Sigmoid colon (tissue), 7 donors: ENCODE measurements at regions of chr15 and their contacts with region 1.

Region 1: GRCh38 chr15:40906091-40906990 is 12.1 kb downstream of the VPS18 start:
- DNase-seq: peak; percentile 94
- H3K4me3 ChIP-seq: peak overlapping the region; percentile 22 to 48 (median 43)
- H3K27ac ChIP-seq: peak overlapping the region; percentile 75 to 87 (median 80)
- H3K4me1 ChIP-seq: peaks cover 0 to 31% (median 30%) of the 10 kb centered on the region in 4 donors
- H3K27me3 ChIP-seq: no peaks in the 10 kb centered on the region
- CTCF ChIP-seq: peak; percentile 55 to 75 (median 60)
- EP300 ChIP-seq: no peak
- POLR2A ChIP-seq: no peak

Region 2: GRCh38 chr15:40941528-40942336 is 35.4 kb after region 1 on chr15:
- intact Hi-C with region 1: loop called (anchors 5 kb)
- DNase-seq: peak; percentile 86
- H3K4me3 ChIP-seq: peak overlapping the region; percentile 40 to 65 (median 60)
- H3K27ac ChIP-seq: peak overlapping the region; percentile 74 to 87 (median 86)
- H3K4me1 ChIP-seq: peaks cover 0 to 24% (median 16%) of the 10 kb centered on the region in 4 donors
- H3K27me3 ChIP-seq: no peaks in the 10 kb centered on the region
- CTCF ChIP-seq: peak in 2 of 4 experiments; percentile 35 to 52
- EP300 ChIP-seq: no peak
- POLR2A ChIP-seq: no peak

Region 3: GRCh38 chr15:40957581-40958051 is 51.3 kb after region 1 on chr15:
- intact Hi-C with region 1: loop called (anchors 5 kb)
- DNase-seq: peak; percentile 96
- H3K4me3 ChIP-seq: no peak overlapping the region
- H3K27ac ChIP-seq: peak overlapping the region; percentile 44 to 91 (median 82)
- H3K4me1 ChIP-seq: peaks cover 0 to 46% (median 31%) of the 10 kb centered on the region in 4 donors
- H3K27me3 ChIP-seq: no peaks in the 10 kb centered on the region
- CTCF ChIP-seq: no peak
- EP300 ChIP-seq: peak in 2 of 4 donors; percentile 36 to 59
- POLR2A ChIP-seq: no peak

Region 4: DNA sequence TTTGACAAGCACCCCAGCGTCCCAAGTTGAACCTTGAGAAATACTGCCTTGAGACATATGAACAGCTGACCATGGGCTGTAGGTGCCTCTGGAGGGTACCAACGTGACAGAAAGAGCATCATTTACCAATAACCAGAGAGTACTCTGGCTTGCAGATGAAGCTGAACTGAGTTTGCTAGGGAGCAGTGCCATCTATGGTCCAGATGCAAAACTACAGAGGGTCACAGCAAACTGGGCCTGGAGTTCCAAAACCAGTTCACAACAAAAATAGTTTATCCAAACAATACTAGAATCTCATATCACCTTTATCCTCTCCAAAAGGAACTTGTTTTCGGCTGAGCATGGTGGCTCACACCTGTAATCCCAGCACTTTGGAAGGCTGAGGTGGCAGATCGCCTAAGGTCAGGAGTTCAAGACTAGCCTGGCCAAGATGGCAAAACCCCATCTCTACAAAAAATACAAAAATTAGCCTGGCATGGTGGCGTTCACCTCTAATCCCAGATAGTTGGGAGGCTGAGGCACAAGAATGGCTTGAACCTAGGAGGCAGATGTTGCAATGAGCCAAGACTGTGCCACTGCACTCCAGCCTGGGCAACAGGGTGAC is 116.2 kb after region 1 on chr15:
- intact Hi-C with region 1: loop called (anchors 2 kb)
- DNase-seq: no peak
- H3K4me3 ChIP-seq: no peak overlapping the region
- H3K27ac ChIP-seq: peak overlapping the region in 2 of 4 donors; percentile 9 to 75
- H3K4me1 ChIP-seq: peaks cover 0 to 38% (median 30%) of the 10 kb centered on the region in 4 donors
- H3K27me3 ChIP-seq: no peaks in the 10 kb centered on the region
- CTCF ChIP-seq: peak; percentile 51 to 71 (median 64)
- EP300 ChIP-seq: no peak
- POLR2A ChIP-seq: no peak

Region 5: GRCh38 chr15:41116116-41116871 is 210.0 kb after region 1 on chr15 and contains the start of gene INO80:
- intact Hi-C with region 1: loop called (anchors 5 kb)
- DNase-seq: peak; percentile 99
- H3K4me3 ChIP-seq: peak within 1 kb of the TSS; percentile 89 to 100 (median 96)
- H3K27ac ChIP-seq: peak within 1 kb of the TSS; percentile 96 to 100 (median 100)
- H3K4me1 ChIP-seq: peaks cover 0 to 18% (median 8%) of the 10 kb centered on the region in 4 donors
- H3K27me3 ChIP-seq: peaks cover 0 to 1% (median 0%) of the 10 kb centered on the region in 3 donors
- CTCF ChIP-seq: no peak
- EP300 ChIP-seq: peak in 1 of 4 donors; percentile 69
- POLR2A ChIP-seq: peak; percentile 46 to 90
- total RNA-seq, gene INO80: 17.1 to 36.6 (median 19.4) TPM

Region 6: DNA sequence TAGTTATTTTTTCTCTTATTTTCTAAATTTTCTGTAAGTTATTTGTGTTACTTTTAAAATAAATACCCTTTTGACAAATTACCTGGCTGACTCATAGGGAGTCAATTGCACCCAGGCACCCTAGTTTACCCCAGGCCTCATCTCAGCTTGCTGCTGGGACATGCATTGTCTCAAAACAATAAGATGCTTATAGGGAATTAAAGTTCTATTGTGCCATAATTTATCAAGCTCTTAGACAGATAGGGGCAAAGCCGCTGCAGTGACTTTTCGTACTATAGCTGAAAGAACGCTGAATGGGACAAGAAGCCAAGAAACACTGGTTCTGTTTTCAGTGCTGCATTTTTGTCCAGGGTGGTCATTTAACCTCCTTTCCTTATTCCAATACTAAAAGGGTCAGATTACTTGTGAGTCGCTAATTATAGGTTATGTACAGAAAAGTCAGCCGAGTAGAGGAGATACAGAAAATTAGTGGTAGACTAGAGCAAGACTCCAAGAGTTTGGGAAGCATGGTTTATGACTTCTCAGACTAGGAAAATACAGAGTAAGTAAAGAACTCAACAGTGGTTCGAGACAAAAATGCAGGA is 274.0 kb after region 1 on chr15:
- intact Hi-C with region 1: loop called (anchors 2 kb)
- DNase-seq: no peak
- H3K4me3 ChIP-seq: no peak overlapping the region
- H3K27ac ChIP-seq: no peak overlapping the region
- H3K4me1 ChIP-seq: no peaks in the 10 kb centered on the region
- H3K27me3 ChIP-seq: no peaks in the 10 kb centered on the region
- CTCF ChIP-seq: no peak
- EP300 ChIP-seq: no peak
- POLR2A ChIP-seq: no peak

Region 7: GRCh38 chr15:41331833-41332787 is 425.8 kb after region 1 on chr15 and contains the start of gene OIP5:
- intact Hi-C with region 1: loop called (anchors 5 kb)
- DNase-seq: peak; percentile 99
- H3K4me3 ChIP-seq: peak within 1 kb of the TSS; percentile 71 to 93 (median 74)
- H3K27ac ChIP-seq: peak within 1 kb of the TSS; percentile 59 to 77 (median 74)
- H3K4me1 ChIP-seq: peaks cover 0 to 17% (median 14%) of the 10 kb centered on the region in 4 donors
- H3K27me3 ChIP-seq: no peaks in the 10 kb centered on the region
- CTCF ChIP-seq: peak; percentile 24 to 85 (median 74)
- EP300 ChIP-seq: no peak
- POLR2A ChIP-seq: no peak
- total RNA-seq, gene OIP5: 0.71 to 1.1 TPM in 2 of 4 donors, not detected in the others